ENCODE measurements at regions of chr5 and their contacts with region 1.

Region 1: DNA sequence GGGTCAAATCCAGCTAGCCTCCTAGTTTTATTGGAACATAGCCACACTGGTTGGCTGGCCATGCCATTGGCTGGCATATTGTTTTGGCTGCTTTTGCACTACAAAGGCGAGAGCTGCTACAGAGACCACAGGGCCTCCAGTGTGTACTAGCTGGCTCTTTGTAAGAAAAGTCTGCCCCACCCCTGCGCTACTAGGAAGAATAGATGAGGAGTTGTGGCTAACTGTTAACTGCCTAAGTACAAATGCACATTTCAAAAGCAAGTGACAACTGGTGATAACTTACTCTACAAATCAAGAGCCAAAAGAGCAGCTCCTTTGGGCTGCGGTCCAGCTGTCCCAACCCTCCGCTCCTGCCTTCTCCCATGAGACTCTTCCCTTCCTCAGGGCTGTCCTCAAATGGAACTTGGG is 63.9 kb downstream of the SERINC5 start:
- DNase-seq: peak; percentile 54
- H3K4me3 ChIP-seq: peak overlapping the region; percentile 54
- H3K27ac ChIP-seq: peak overlapping the region; percentile 98
- H3K4me1 ChIP-seq: peaks cover 93% of the 10 kb centered on the region
- CTCF ChIP-seq: no peak

Region 2: DNA sequence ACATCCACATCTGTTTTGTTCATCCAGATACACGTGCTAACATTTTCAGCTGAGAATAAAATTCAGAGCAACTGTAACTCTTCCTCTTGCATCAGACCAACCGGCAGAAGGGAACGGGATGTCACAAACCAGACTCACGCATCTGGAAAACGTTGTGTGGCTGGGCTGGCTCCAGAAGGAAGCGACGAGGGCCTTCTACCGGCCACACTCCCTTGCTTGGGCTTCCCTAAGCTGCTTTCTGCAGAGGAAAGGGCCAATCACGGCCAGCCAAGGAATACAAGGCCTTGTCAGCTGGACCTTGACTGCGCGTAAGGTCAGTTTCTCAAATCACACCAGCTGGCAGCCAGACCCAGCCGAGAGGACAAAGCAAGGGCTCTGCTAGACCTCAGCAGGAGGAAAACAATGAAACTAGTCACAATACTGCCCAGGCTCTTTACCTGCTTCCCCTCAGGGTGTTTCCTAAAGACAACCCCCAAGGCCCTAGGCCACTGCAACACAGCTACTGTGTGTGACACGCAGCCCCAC is 50.8 kb before region 1 on chr5:
- CTCF ChIA-PET with region 1: no interaction called
- POLR2A ChIA-PET with region 1: interaction called, 7 read pairs
- intact Hi-C with region 1: loop called (anchors 2 kb)
- DNase-seq: no peak
- H3K4me3 ChIP-seq: no peak overlapping the region
- H3K27ac ChIP-seq: peak overlapping the region; percentile 75
- H3K4me1 ChIP-seq: peaks cover 42% of the 10 kb centered on the region
- CTCF ChIP-seq: no peak

Region 3: DNA sequence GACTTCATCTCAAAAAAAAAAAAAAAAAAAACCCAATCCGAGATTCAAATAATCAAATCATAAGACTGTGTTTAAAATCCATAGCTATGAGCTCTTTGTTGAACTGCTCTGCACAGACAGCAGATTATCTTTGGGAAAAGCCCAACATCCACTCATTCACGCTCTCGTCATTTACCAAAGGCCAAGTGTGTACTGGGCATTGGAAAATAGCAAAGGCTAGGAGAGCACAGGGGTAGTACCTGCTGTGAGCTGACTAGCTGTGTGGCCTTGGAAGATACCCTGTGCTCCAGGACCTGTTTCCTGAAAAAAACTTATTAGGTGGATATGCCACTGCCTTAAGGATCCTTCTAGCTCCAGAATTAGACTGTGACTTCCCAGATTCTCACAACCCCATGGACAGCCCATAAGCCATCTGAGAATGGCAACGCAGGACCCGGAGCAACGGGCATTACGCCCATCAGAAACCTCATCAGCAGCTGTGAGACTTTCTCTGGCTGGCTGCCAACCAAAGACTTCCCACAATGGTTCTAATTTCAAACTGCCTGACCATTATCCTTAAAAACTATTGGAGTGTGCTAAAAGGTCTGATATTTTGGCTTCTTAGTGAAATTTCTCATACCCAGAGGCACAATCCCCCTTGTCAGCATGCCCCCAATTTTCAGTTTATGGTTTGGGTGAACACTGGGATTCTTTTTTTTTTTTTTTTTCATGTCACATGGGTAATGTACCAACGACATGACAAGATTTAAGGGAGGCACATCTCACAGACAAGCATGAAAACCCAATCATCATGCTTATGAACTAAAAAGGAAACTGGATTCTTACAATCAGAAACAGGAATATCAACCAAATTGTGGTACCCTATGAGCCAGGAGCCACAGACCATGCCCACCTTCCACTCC is 47.0 kb after region 1 on chr5:
- CTCF ChIA-PET with region 1: no interaction called
- POLR2A ChIA-PET with region 1: interaction called, 34 read pairs
- intact Hi-C with region 1: no loop called
- DNase-seq: no peak
- H3K4me3 ChIP-seq: peak overlapping the region; percentile 40
- H3K27ac ChIP-seq: peak overlapping the region; percentile 35
- H3K4me1 ChIP-seq: peaks cover 48% of the 10 kb centered on the region
- CTCF ChIP-seq: no peak

Region 4: GRCh38 chr5:81097713-81098112 is 905.7 kb after region 1 on chr5:
- CTCF ChIA-PET with region 1: no interaction called
- POLR2A ChIA-PET with region 1: no interaction called
- intact Hi-C with region 1: no loop called
- DNase-seq: no peak
- H3K4me3 ChIP-seq: no peak overlapping the region
- H3K27ac ChIP-seq: no peak overlapping the region
- H3K4me1 ChIP-seq: no peaks in the 10 kb centered on the region
- CTCF ChIP-seq: no peak

Measured in OCI-LY7 (cell line).